ENCODE measurements at regions of chr18 and their contacts with region 1.

Region 1: GRCh38 chr18:50307738-50308470 is 20.4 kb upstream of the CXXC1 start:
- DNase-seq: peak; percentile 75 to 96 (median 91)
- ATAC-seq: peak; percentile 99
- H3K4me3 ChIP-seq: peak overlapping the region; percentile 52 to 59
- H3K4me3 Mint-ChIP-seq: peak overlapping the region; percentile 96
- H3K27ac ChIP-seq: peak overlapping the region; percentile 24 to 41
- H3K27ac Mint-ChIP-seq: peak overlapping the region; percentile 63
- H3K4me1 ChIP-seq: peaks cover 6% of the 10 kb centered on the region
- H3K4me1 Mint-ChIP-seq: peaks cover 20% of the 10 kb centered on the region
- H3K27me3 ChIP-seq: peaks cover 0 to 4% of the 10 kb centered on the region in 2 experiments
- H3K27me3 Mint-ChIP-seq: peaks cover 12% of the 10 kb centered on the region
- CTCF ChIP-seq: no peak

Region 2: DNA sequence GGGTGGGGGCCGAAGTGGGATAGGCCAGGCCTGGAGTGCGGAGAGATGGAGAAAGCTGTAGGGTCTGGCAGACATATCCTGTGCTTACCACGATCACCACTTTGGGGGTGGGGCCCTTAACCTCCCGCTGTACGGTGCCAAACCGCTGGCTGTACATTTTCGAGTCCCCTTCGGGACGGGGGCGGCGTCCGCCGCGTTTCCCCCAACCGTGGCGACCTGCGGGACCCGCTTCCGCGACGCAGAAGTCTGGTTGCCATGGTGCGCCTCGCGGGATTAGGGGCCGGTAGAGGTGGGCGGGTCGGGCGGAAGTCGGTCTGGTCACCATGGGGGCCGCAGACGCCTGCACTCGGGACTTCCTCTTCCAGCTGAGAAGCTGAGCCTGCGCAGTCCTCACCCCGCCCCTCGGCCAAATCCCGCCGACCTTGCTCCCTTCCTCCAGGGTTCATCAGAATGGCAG is 41.6 kb before region 1 on chr18 and contains the start of gene CFAP53:
- CTCF ChIA-PET with region 1: interaction called, 3 read pairs
- POLR2A ChIA-PET with region 1: interaction called, 4 read pairs
- intact Hi-C with region 1: loop called in 1 of 2 experiments (anchors 1 kb)
- DNase-seq: peak; percentile 58 to 93 (median 86)
- ATAC-seq: peak; percentile 83
- H3K4me3 ChIP-seq: peak within 1 kb of the TSS; percentile 38 to 67
- H3K4me3 Mint-ChIP-seq: peak within 1 kb of the TSS; percentile 88
- H3K27ac ChIP-seq: peak within 1 kb of the TSS; percentile 43 to 85
- H3K27ac Mint-ChIP-seq: peak within 1 kb of the TSS; percentile 85
- H3K4me1 ChIP-seq: peaks cover 18% of the 10 kb centered on the region
- H3K4me1 Mint-ChIP-seq: peaks cover 24% of the 10 kb centered on the region
- H3K27me3 ChIP-seq: no peaks in the 10 kb centered on the region
- H3K27me3 Mint-ChIP-seq: no peaks in the 10 kb centered on the region
- CTCF ChIP-seq: no peak
- total RNA-seq, gene CFAP53: 0.22 to 0.36 TPM

Region 3: GRCh38 chr18:50297621-50298442 is 10.1 kb before region 1 on chr18:
- CTCF ChIA-PET with region 1: no interaction called
- POLR2A ChIA-PET with region 1: interaction called, 8 read pairs
- intact Hi-C with region 1: loop called in 1 of 2 experiments (anchors 1 kb)
- DNase-seq: peak; percentile 39 to 84 (median 74)
- ATAC-seq: peak; percentile 93
- H3K4me3 ChIP-seq: peak overlapping the region; percentile 38 to 53
- H3K4me3 Mint-ChIP-seq: peak overlapping the region; percentile 81
- H3K27ac ChIP-seq: no peak overlapping the region
- H3K27ac Mint-ChIP-seq: no peak overlapping the region
- H3K4me1 ChIP-seq: peaks cover 11% of the 10 kb centered on the region
- H3K4me1 Mint-ChIP-seq: peaks cover 9% of the 10 kb centered on the region
- H3K27me3 ChIP-seq: peaks cover 0 to 8% of the 10 kb centered on the region in 2 experiments
- H3K27me3 Mint-ChIP-seq: peaks cover 27% of the 10 kb centered on the region
- CTCF ChIP-seq: no peak